Adrenal gland (tissue), 19 donors: ENCODE measurements at regions of chr19 and their contacts with region 1.

Region 1: GRCh38 chr19:34712395-34713261 is 21.4 kb upstream of the ZNF181 start:
- DNase-seq: peak; percentile 53 to 79 (median 68)
- H3K4me3 ChIP-seq: no peak overlapping the region
- H3K27ac ChIP-seq: no peak overlapping the region
- H3K4me1 ChIP-seq: no peaks in the 10 kb centered on the region
- H3K27me3 ChIP-seq: no peaks in the 10 kb centered on the region
- CTCF ChIP-seq: peak; percentile 83 to 93 (median 88)
- POLR2A ChIP-seq: no peak

Region 2: DNA sequence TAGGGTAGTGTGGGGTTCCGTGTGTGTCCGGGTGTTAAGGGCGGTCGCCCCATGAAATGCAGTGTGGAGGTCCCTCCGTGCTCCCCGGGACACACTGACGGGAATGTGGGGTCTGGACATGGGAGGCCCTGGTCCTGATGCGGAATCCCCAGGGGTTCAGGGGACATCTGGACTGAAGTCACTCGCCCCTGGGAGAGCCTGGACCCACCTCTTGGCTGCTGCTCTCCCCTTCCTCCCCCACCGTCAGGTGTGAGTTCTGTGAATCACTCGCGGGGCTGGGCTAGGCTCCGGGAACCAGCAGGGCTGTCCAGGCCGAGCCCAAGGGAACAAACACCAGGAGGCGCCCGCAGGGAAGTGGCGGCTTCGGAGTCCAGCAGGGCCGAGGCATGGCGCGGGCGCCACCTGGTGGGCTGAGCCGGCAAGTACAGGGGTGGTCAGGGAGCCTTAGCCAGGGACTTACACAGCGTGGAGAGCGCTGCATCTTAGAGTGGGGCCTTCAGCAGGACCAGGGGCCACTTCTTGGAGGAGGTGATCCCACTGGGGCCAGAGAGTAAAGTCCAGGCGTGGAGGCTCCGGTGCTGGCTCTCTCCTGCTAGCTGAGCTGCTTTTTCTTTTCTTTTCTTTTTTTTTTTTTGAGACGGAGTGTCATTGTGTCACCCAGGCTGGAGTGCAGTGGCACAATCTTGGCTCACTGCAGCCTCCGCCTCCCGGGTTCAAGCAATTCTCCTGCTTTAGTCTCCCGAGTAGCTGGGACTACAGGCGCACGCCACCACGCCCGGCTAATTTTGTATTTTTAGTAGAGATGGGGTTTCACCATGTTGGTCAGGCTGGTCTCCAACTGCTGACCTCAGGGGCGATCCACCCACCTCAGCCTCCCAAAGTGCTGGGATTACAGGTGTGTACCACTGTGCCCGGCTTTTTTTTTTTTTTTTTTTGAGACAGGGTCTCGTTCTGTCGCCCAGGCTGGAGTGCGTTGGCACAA is 211.0 kb before region 1 on chr19:
- intact Hi-C with region 1: loop called in 1 of 2 experiments (anchors 5 kb)
- DNase-seq: peak; percentile 92 to 96 (median 93)
- H3K4me3 ChIP-seq: no peak overlapping the region
- H3K27ac ChIP-seq: no peak overlapping the region
- H3K4me1 ChIP-seq: no peaks in the 10 kb centered on the region
- H3K27me3 ChIP-seq: no peaks in the 10 kb centered on the region
- CTCF ChIP-seq: peak; percentile 99
- POLR2A ChIP-seq: no peak

Region 3: GRCh38 chr19:34639491-34640085 is 73.0 kb before region 1 on chr19:
- intact Hi-C with region 1: loop called (anchors 2 to 10 kb)
- DNase-seq: peak; percentile 56 to 74 (median 70)
- H3K4me3 ChIP-seq: no peak overlapping the region
- H3K27ac ChIP-seq: no peak overlapping the region
- H3K4me1 ChIP-seq: no peaks in the 10 kb centered on the region
- H3K27me3 ChIP-seq: no peaks in the 10 kb centered on the region
- CTCF ChIP-seq: peak; percentile 75 to 88 (median 80)
- POLR2A ChIP-seq: no peak